ENCODE measurements at regions of chr1 and their contacts with region 1.

Region 1: GRCh38 chr1:160789702-160790611 is 6.0 kb upstream of the LY9 start:
- DNase-seq: peak; percentile 89
- ATAC-seq: peak; percentile 91
- H3K4me3 ChIP-seq: no peak overlapping the region; the same call in 1 of the 2 replicates
- H3K27ac ChIP-seq: peak overlapping the region; percentile 86
- H3K4me1 ChIP-seq: peaks cover 19% of the 10 kb centered on the region
- H3K27me3 ChIP-seq: no peaks in the 10 kb centered on the region
- CTCF ChIP-seq: no peak
- EP300 ChIP-seq: peak; percentile 96 to 99
- POLR2A ChIP-seq: no peak
- RAD21 ChIP-seq: no peak

Region 2: GRCh38 chr1:160726498-160727315 is 63.2 kb before region 1 on chr1:
- CTCF ChIA-PET with region 1: interaction called, 18 read pairs
- POLR2A ChIA-PET with region 1: interaction called, 3 read pairs
- RAD21 ChIA-PET with region 1: interaction called, 18 read pairs
- SMC1A ChIA-PET with region 1: interaction called, 7 read pairs
- in situ Hi-C with region 1: no loop called
- intact Hi-C with region 1: no loop called
- DNase-seq: no peak
- ATAC-seq: peak; percentile 80
- H3K4me3 ChIP-seq: no peak overlapping the region
- H3K27ac ChIP-seq: peak overlapping the region; percentile 85
- H3K4me1 ChIP-seq: peaks cover 40% of the 10 kb centered on the region
- H3K27me3 ChIP-seq: no peaks in the 10 kb centered on the region
- CTCF ChIP-seq: peak; percentile 81 to 92 (median 91); a peak in 5 of 6 replicates
- EP300 ChIP-seq: no peak
- POLR2A ChIP-seq: no peak
- RAD21 ChIP-seq: peak; percentile 99

Region 3: GRCh38 chr1:161032409-161032808 is 242.5 kb after region 1 on chr1:
- CTCF ChIA-PET with region 1: no interaction called
- POLR2A ChIA-PET with region 1: no interaction called
- RAD21 ChIA-PET with region 1: no interaction called
- SMC1A ChIA-PET with region 1: no interaction called
- in situ Hi-C with region 1: no loop called
- intact Hi-C with region 1: no loop called
- DNase-seq: no peak
- ATAC-seq: peak; percentile 14; the same call in 2 of the 3 replicates
- H3K4me3 ChIP-seq: no peak overlapping the region
- H3K27ac ChIP-seq: no peak overlapping the region
- H3K4me1 ChIP-seq: no peaks in the 10 kb centered on the region
- H3K27me3 ChIP-seq: no peaks in the 10 kb centered on the region
- CTCF ChIP-seq: no peak
- EP300 ChIP-seq: no peak
- POLR2A ChIP-seq: no peak
- RAD21 ChIP-seq: no peak